ENCODE measurements at regions of chr20 and their contacts with region 1.

Region 1: DNA sequence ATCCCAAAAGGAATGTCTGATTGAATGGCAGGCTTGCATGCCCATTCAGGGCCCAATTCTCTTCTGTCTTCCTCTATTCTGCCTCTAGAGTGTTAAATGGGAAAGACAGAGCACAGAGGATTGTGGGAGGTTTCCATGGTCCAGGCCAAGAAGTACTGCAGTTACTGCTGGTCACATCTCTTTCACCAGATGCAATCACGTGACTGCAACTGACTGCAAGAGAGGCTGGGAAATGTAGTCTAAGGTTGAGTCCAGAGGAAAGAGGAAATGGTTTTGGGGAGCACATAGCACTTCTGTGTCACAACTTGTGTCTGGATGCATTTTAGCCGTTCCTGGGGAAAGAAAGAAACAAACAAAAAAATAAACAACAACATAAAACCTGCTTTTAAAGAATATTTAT is 336.4 kb upstream of the BTBD3 start:
- DNase-seq: no peak
- ATAC-seq: no peak
- H3K4me3 ChIP-seq: no peak overlapping the region
- H3K27ac ChIP-seq: no peak overlapping the region
- H3K4me1 ChIP-seq: no peaks in the 10 kb centered on the region
- H3K27me3 ChIP-seq: no peaks in the 10 kb centered on the region; the same call in none of the 2 replicates
- CTCF ChIP-seq: no peak

Region 2: DNA sequence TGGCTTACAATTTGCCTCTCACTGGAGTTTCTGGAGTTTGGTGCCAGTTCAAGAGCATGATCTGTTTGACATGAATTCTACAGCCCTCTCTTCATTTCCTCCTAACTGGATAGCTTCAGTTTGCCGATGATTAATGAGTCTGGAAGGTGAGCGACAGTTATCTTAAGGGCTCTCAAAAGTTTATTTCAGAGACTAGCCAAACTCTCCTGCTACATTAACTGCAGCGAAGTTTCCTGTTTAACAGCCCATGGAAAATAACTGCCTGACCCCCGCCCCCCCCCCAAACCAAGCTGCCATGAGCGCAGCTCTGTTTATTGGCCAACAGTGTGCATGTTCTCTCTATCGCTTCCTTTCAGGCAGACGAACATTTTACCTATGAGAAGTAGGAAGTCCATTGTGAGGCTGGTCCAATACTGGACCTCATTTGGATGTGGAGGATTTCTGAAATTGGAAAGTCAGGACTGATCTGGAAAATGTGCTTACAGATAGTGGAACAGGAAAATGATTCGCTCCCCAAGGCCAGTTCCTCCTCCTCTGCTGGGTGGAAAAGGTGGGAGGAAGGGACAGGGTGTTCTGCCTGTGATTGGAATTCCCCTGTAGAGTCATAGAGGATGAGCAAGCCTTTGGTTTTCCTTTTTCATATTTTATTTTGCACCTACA is 385.2 kb before region 1 on chr20:
- CTCF ChIA-PET with region 1: no interaction called
- POLR2A ChIA-PET with region 1: no interaction called
- in situ Hi-C with region 1: no loop called
- intact Hi-C with region 1: no loop called
- DNase-seq: no peak
- ATAC-seq: no peak
- H3K4me3 ChIP-seq: no peak overlapping the region
- H3K27ac ChIP-seq: no peak overlapping the region
- H3K4me1 ChIP-seq: no peaks in the 10 kb centered on the region
- H3K27me3 ChIP-seq: no peaks in the 10 kb centered on the region
- CTCF ChIP-seq: no peak

Region 3: GRCh38 chr20:11323816-11324215 is 257.5 kb before region 1 on chr20:
- CTCF ChIA-PET with region 1: no interaction called
- POLR2A ChIA-PET with region 1: no interaction called
- in situ Hi-C with region 1: no loop called
- intact Hi-C with region 1: no loop called
- DNase-seq: no peak
- ATAC-seq: no peak
- H3K4me3 ChIP-seq: no peak overlapping the region
- H3K27ac ChIP-seq: no peak overlapping the region
- H3K4me1 ChIP-seq: no peaks in the 10 kb centered on the region
- H3K27me3 ChIP-seq: no peaks in the 10 kb centered on the region
- CTCF ChIP-seq: no peak

Region 4: DNA sequence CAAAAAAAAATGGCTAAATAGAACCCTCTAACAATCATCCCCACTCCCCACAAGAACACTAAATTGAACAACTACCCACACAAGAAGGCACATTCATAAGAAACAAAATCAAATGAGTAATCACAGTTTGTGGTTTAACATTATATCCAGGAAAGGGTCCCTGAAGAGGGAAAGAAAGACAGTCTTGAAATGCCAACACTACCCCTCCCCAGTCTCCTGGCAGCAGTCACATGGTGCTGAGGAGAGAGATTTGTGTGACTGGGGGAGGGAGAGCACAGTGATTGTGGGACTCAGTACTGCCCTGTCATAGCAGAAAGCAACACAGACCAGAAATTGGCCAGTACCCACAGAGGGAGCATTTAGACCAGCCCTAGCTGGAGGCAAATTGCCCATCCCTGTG is 107.3 kb before region 1 on chr20:
- CTCF ChIA-PET with region 1: no interaction called
- POLR2A ChIA-PET with region 1: no interaction called
- in situ Hi-C with region 1: no loop called
- intact Hi-C with region 1: no loop called
- DNase-seq: no peak
- ATAC-seq: no peak
- H3K4me3 ChIP-seq: no peak overlapping the region
- H3K27ac ChIP-seq: no peak overlapping the region
- H3K4me1 ChIP-seq: no peaks in the 10 kb centered on the region
- H3K27me3 ChIP-seq: no peaks in the 10 kb centered on the region
- CTCF ChIP-seq: no peak

Region 5: DNA sequence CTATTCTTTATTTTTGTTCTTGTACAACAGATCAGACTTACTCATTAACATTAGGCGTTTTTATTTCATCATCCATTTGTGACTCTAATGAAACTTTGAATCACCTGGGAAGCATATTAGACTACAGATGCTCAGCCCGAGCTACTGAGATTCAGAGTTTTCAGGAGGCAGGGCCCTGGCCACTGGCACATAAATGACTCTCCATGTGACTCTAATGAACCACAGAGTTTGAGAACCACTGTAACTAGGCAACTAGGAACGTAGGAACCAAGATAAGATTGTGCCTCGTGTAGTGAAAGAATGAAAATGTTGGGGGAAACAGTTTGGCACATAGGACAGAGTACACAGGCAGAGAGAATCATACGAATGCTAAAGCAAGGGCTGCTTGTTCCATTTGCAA is 69.5 kb before region 1 on chr20:
- CTCF ChIA-PET with region 1: no interaction called
- POLR2A ChIA-PET with region 1: no interaction called
- in situ Hi-C with region 1: no loop called
- intact Hi-C with region 1: no loop called
- DNase-seq: no peak
- ATAC-seq: no peak
- H3K4me3 ChIP-seq: no peak overlapping the region
- H3K27ac ChIP-seq: no peak overlapping the region
- H3K4me1 ChIP-seq: no peaks in the 10 kb centered on the region
- H3K27me3 ChIP-seq: no peaks in the 10 kb centered on the region
- CTCF ChIP-seq: no peak

Region 6: GRCh38 chr20:11591965-11592364 is 10.7 kb after region 1 on chr20:
- CTCF ChIA-PET with region 1: no interaction called
- POLR2A ChIA-PET with region 1: no interaction called
- in situ Hi-C with region 1: no loop called
- intact Hi-C with region 1: loop called (anchors 2 kb)
- DNase-seq: no peak
- ATAC-seq: no peak
- H3K4me3 ChIP-seq: no peak overlapping the region
- H3K27ac ChIP-seq: no peak overlapping the region
- H3K4me1 ChIP-seq: no peaks in the 10 kb centered on the region
- H3K27me3 ChIP-seq: no peaks in the 10 kb centered on the region
- CTCF ChIP-seq: no peak